ENCODE measurements at regions of chr12 and their contacts with region 1.

Region 1: GRCh38 chr12:45669093-45669492 is 60.4 kb upstream of the ARID2 start:
- DNase-seq: no peak
- H3K4me3 ChIP-seq: no peak overlapping the region
- H3K4me3 Mint-ChIP-seq: no peak overlapping the region
- H3K27ac Mint-ChIP-seq: no peak overlapping the region
- H3K4me1 ChIP-seq: peaks cover 22% of the 10 kb centered on the region
- H3K4me1 Mint-ChIP-seq: peaks cover 22% of the 10 kb centered on the region
- H3K27me3 ChIP-seq: no peaks in the 10 kb centered on the region
- H3K27me3 Mint-ChIP-seq: no peaks in the 10 kb centered on the region
- CTCF ChIP-seq: no peak

Region 2: DNA sequence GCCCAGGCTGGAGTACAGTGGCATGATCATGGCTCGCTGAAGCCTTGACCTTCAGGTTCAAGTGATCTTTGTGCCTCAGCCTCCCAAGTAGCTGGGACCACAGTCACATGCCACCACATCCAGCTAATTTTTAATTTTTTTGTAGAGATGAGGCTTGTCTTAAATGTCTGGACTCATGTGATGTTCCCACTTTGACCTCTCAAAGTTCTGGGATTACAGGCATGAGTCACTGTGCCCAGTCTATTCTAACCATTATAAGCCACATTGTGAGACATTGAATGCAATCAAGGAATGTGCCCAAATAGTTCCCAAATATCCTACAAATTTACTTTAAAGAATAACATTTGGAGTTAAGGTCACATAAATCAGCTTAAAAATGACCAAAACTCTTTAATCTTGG is 70.3 kb before region 1 on chr12:
- CTCF ChIA-PET with region 1: no interaction called
- POLR2A ChIA-PET with region 1: no interaction called
- intact Hi-C with region 1: loop called (anchors 5 kb)
- DNase-seq: no peak
- H3K4me3 ChIP-seq: no peak overlapping the region
- H3K4me3 Mint-ChIP-seq: no peak overlapping the region
- H3K27ac Mint-ChIP-seq: no peak overlapping the region
- H3K4me1 ChIP-seq: peaks cover 12% of the 10 kb centered on the region
- H3K4me1 Mint-ChIP-seq: peaks cover 27% of the 10 kb centered on the region
- H3K27me3 ChIP-seq: no peaks in the 10 kb centered on the region
- H3K27me3 Mint-ChIP-seq: no peaks in the 10 kb centered on the region
- CTCF ChIP-seq: no peak

Region 3: DNA sequence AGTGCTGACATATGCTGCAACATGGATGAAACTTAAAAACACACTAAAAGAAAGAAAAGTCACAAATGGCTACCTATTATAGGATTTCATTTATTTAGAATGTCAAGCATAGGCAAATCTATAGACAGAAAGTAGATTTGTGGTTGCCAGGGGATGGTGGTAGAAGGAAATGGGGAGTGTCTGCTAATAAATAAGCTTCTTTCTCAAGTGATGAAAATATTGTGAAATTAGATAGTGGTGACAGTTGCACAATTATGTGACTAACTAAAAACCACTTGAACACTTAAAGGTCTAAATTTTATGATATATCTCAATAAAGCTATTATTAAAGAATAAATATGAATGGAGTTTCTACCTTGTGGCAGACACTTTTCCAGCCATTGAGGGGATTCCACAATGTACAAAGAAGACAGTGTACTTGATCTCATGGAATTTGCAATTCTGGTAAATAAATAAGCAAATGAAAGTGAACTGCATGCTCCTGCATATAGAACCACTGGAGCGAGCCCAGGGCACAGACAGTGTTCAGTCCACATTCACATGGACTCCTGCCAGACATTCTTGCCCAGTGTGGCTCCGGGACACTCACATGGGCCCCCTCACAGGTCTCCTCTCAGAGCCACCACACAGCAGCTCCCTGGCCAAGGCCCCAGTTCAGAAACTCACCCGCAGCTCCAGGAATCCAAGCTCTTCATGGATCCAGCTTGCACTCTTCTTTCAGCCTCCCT is 46.7 kb before region 1 on chr12:
- CTCF ChIA-PET with region 1: no interaction called
- POLR2A ChIA-PET with region 1: no interaction called
- intact Hi-C with region 1: no loop called
- DNase-seq: no peak
- H3K4me3 ChIP-seq: no peak overlapping the region
- H3K4me3 Mint-ChIP-seq: no peak overlapping the region
- H3K27ac Mint-ChIP-seq: no peak overlapping the region
- H3K4me1 ChIP-seq: peaks cover 6% of the 10 kb centered on the region; the same call in 1 of the 2 replicates
- H3K4me1 Mint-ChIP-seq: peaks cover 7% of the 10 kb centered on the region
- H3K27me3 ChIP-seq: no peaks in the 10 kb centered on the region
- H3K27me3 Mint-ChIP-seq: no peaks in the 10 kb centered on the region
- CTCF ChIP-seq: no peak

Region 4: GRCh38 chr12:45703942-45704341 is 34.8 kb after region 1 on chr12:
- CTCF ChIA-PET with region 1: no interaction called
- POLR2A ChIA-PET with region 1: no interaction called
- intact Hi-C with region 1: loop called (anchors 2 kb)
- DNase-seq: no peak
- H3K4me3 ChIP-seq: no peak overlapping the region
- H3K4me3 Mint-ChIP-seq: no peak overlapping the region
- H3K27ac Mint-ChIP-seq: no peak overlapping the region
- H3K4me1 ChIP-seq: peaks cover 47% of the 10 kb centered on the region
- H3K4me1 Mint-ChIP-seq: peaks cover 36% of the 10 kb centered on the region
- H3K27me3 ChIP-seq: no peaks in the 10 kb centered on the region
- H3K27me3 Mint-ChIP-seq: no peaks in the 10 kb centered on the region
- CTCF ChIP-seq: no peak